ENCODE measurements at regions of chr5 and their contacts with region 1.

Region 1: GRCh38 chr5:142324871-142325724 is at the start of gene SPRY4:
- DNase-seq: peak; percentile 81
- ATAC-seq: peak; percentile 77
- H3K4me3 ChIP-seq: peak within 1 kb of the TSS; percentile 44 to 75 (median 59)
- H3K4me3 Mint-ChIP-seq: peak within 1 kb of the TSS; percentile 90
- H3K27ac ChIP-seq: no peak within 1 kb of the TSS
- H3K27ac Mint-ChIP-seq: peak within 1 kb of the TSS; percentile 83
- H3K4me1 ChIP-seq: peaks cover 30 to 50% of the 10 kb centered on the region in 2 donors
- H3K4me1 Mint-ChIP-seq: peaks cover 37% of the 10 kb centered on the region
- H3K27me3 ChIP-seq: peaks cover 0 to 88% (median 44%) of the 10 kb centered on the region in 4 experiments
- H3K27me3 Mint-ChIP-seq: peaks cover 69% of the 10 kb centered on the region
- CTCF ChIP-seq: no peak
- total RNA-seq, gene SPRY4: not detected in 2 replicates

Region 2: GRCh38 chr5:141192110-141192732 is 1132.9 kb before region 1 on chr5 and contains the start of gene PCDHB10:
- CTCF ChIA-PET with region 1: no interaction called
- POLR2A ChIA-PET with region 1: no interaction called
- intact Hi-C with region 1: no loop called
- DNase-seq: no peak
- ATAC-seq: no peak
- H3K4me3 ChIP-seq: no peak within 1 kb of the TSS
- H3K4me3 Mint-ChIP-seq: no peak within 1 kb of the TSS
- H3K27ac ChIP-seq: no peak within 1 kb of the TSS
- H3K27ac Mint-ChIP-seq: no peak within 1 kb of the TSS
- H3K4me1 ChIP-seq: no peaks in the 10 kb centered on the region
- H3K4me1 Mint-ChIP-seq: no peaks in the 10 kb centered on the region
- H3K27me3 ChIP-seq: peaks cover 0 to 8% (median 2%) of the 10 kb centered on the region in 4 experiments
- H3K27me3 Mint-ChIP-seq: peaks cover 20% of the 10 kb centered on the region
- CTCF ChIP-seq: no peak
- total RNA-seq, gene PCDHB10: not detected in 2 replicates

Region 3: DNA sequence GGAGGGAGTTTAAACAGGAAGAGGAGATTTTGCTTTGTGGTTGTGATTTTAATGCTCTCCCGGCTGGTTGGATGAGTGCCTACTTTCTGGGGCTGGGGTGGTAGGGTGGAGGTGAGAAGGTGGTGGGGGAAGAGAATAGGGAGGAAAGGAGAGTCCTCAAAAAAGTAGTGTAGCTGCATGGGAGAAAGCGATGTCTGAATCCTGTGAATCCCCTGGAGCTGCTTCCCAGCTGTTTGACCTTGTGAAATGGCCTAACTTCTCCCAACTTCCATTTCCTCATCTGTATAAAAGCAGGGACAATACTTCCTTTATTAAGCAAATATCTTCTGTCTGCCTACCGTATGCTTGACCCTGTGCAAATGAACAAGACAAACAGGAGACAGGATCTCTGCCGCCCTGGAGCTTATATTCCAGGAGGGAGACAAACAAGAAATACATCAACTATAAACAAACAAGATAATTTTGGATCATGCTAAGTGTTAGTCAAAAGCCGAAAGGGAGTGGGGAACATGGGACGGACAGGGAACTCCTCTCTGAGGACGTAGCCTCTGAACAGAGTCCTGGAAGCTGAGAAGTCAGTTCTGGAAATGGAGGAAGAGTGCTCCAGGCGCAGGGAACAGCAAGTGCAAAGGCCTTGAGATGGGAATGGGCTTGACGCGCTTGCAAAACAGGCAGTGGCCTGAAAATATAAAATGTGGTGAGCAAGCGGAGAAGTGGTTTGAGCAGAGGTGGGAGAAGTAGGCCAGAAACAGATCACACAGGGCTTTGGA is 103.8 kb before region 1 on chr5:
- CTCF ChIA-PET with region 1: no interaction called
- POLR2A ChIA-PET with region 1: no interaction called
- intact Hi-C with region 1: loop called (anchors 10 kb)
- DNase-seq: no peak
- ATAC-seq: no peak
- H3K4me3 ChIP-seq: no peak overlapping the region
- H3K4me3 Mint-ChIP-seq: peak overlapping the region; percentile 79
- H3K27ac ChIP-seq: no peak overlapping the region
- H3K27ac Mint-ChIP-seq: no peak overlapping the region
- H3K4me1 ChIP-seq: peaks cover 19 to 22% of the 10 kb centered on the region in 2 donors
- H3K4me1 Mint-ChIP-seq: peaks cover 32% of the 10 kb centered on the region
- H3K27me3 ChIP-seq: peaks cover 0 to 18% (median 0%) of the 10 kb centered on the region in 4 experiments
- H3K27me3 Mint-ChIP-seq: peaks cover 24% of the 10 kb centered on the region
- CTCF ChIP-seq: no peak

Region 4: GRCh38 chr5:142356716-142357473 is 31.8 kb after region 1 on chr5:
- CTCF ChIA-PET with region 1: interaction called, 3 read pairs
- POLR2A ChIA-PET with region 1: no interaction called
- intact Hi-C with region 1: loop called (anchors 1 kb)
- DNase-seq: peak; percentile 90
- ATAC-seq: peak; percentile 84
- H3K4me3 ChIP-seq: peak overlapping the region; percentile 54 to 86 (median 64)
- H3K4me3 Mint-ChIP-seq: peak overlapping the region; percentile 84
- H3K27ac ChIP-seq: peak overlapping the region; percentile 28 to 83
- H3K27ac Mint-ChIP-seq: peak overlapping the region; percentile 80
- H3K4me1 ChIP-seq: peaks cover 40 to 44% of the 10 kb centered on the region in 2 donors
- H3K4me1 Mint-ChIP-seq: peaks cover 47% of the 10 kb centered on the region
- H3K27me3 ChIP-seq: peaks cover 0 to 27% (median 10%) of the 10 kb centered on the region in 4 experiments
- H3K27me3 Mint-ChIP-seq: peaks cover 9% of the 10 kb centered on the region
- CTCF ChIP-seq: no peak

Region 5: GRCh38 chr5:142685418-142686209 is 360.5 kb after region 1 on chr5 and contains the start of gene FGF1:
- CTCF ChIA-PET with region 1: no interaction called
- POLR2A ChIA-PET with region 1: no interaction called
- intact Hi-C with region 1: no loop called
- DNase-seq: no peak
- ATAC-seq: no peak
- H3K4me3 ChIP-seq: no peak within 1 kb of the TSS
- H3K4me3 Mint-ChIP-seq: no peak within 1 kb of the TSS
- H3K27ac ChIP-seq: no peak within 1 kb of the TSS
- H3K27ac Mint-ChIP-seq: no peak within 1 kb of the TSS
- H3K4me1 ChIP-seq: no peaks in the 10 kb centered on the region
- H3K4me1 Mint-ChIP-seq: no peaks in the 10 kb centered on the region
- H3K27me3 ChIP-seq: peaks cover 0 to 3% (median 1%) of the 10 kb centered on the region in 4 experiments
- H3K27me3 Mint-ChIP-seq: peaks cover 26% of the 10 kb centered on the region
- CTCF ChIP-seq: no peak
- total RNA-seq, gene FGF1: not detected in 2 replicates